ENCODE measurements at regions of chr18 and their contacts with region 1.

Region 1: GRCh38 chr18:54558609-54559585 is 32.1 kb upstream of the DYNAP start:
- DNase-seq: peak; percentile 59
- ATAC-seq: no peak
- H3K4me3 ChIP-seq: no peak overlapping the region
- H3K27ac ChIP-seq: no peak overlapping the region
- H3K4me1 ChIP-seq: no peaks in the 10 kb centered on the region
- H3K27me3 ChIP-seq: no peaks in the 10 kb centered on the region
- CTCF ChIP-seq: peak; percentile 80

Region 2: GRCh38 chr18:54392543-54393023 is 166.3 kb before region 1 on chr18:
- CTCF ChIA-PET with region 1: no interaction called
- POLR2A ChIA-PET with region 1: no interaction called
- intact Hi-C with region 1: loop called (anchors 2 kb)
- DNase-seq: peak; percentile 90
- ATAC-seq: peak; percentile 27
- H3K4me3 ChIP-seq: no peak overlapping the region
- H3K27ac ChIP-seq: no peak overlapping the region
- H3K4me1 ChIP-seq: peaks cover 25% of the 10 kb centered on the region
- H3K27me3 ChIP-seq: no peaks in the 10 kb centered on the region
- CTCF ChIP-seq: peak; percentile 76

Region 3: GRCh38 chr18:54647176-54647575 is 88.3 kb after region 1 on chr18:
- CTCF ChIA-PET with region 1: interaction called, 3 read pairs
- POLR2A ChIA-PET with region 1: no interaction called
- intact Hi-C with region 1: loop called (anchors 1 kb)
- DNase-seq: peak; percentile 69
- ATAC-seq: peak; percentile 74
- H3K4me3 ChIP-seq: no peak overlapping the region
- H3K27ac ChIP-seq: no peak overlapping the region
- H3K4me1 ChIP-seq: no peaks in the 10 kb centered on the region
- H3K27me3 ChIP-seq: peaks cover 5% of the 10 kb centered on the region; the same call in 1 of the 2 replicates
- CTCF ChIP-seq: peak; percentile 77

Region 4: DNA sequence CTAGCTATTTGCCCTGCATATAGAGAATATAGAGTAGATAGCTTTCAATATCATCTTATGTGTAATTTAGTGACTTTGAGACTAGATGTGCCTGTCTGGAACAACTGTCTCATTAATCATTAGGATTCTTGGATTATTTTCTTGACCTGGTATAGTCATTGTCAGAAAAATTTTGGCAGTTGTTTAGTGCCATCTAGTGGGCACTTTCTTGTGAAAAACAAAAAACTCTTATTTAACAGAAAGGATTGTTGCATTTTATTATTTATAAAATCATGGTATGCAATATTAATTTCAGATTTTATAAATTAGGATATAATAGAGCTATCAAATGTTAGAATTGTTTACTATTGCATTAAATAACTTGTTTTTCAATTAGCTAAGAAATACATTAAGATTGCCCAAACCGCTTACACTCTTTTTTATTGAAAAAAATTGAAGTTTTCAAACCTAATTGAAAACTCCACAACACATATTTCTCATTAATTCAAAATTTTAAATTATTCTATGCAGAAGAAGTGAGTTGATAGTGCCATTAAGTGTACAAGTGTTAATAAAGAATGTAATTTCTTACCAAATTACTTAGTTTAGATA is 112.5 kb after region 1 on chr18:
- CTCF ChIA-PET with region 1: no interaction called
- POLR2A ChIA-PET with region 1: no interaction called
- intact Hi-C with region 1: loop called (anchors 1 kb)
- DNase-seq: peak; percentile 70
- ATAC-seq: peak; percentile 29; the same call in 1 of the 2 replicates
- H3K4me3 ChIP-seq: no peak overlapping the region
- H3K27ac ChIP-seq: no peak overlapping the region
- H3K4me1 ChIP-seq: peaks cover 20% of the 10 kb centered on the region
- H3K27me3 ChIP-seq: no peaks in the 10 kb centered on the region
- CTCF ChIP-seq: peak; percentile 73

Region 5: DNA sequence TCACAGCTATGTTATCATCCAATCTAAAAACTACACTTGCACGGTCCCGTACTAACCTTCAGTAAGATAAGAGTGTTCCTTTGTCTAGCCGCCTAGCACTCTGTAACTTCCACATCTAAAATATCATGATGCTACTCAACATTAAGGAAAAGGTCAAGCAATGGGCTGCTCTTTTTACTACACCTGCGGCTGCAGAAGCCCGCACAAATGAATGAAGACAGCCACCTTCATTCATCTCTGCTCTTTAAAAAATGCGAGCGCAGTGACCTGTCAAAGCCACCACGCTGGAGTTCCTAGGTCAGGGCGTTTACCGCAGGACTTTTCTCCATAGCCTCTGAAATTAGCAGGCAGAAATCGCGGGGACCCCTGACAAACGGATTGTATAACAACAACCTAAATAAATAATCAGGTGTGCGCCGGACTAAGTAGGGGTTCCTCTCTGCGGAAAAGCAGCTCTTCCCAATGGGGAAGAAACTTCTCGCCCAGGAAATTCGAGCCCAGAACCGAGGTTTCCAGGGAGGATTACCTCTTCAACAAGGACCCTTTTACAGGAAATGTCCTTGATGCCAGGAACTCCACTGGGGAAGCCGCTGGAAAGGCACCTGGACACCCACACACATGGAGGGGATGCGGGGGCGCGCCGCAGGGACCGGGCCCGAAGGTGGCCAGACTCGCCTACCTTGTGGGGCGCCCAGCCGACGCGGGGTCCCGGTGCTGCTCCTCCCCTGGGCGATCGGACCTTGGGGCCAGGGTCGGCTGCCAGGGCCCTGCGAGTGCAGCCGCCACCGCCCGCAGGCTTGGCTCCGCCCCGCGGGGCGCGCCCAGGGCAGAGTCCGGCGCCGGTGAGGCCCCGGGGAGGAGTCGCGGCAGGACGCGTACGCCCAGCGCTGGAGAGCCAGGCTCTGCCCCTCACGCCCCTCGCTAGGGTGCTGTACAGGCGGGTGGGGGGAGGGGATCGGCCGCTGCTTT is 400.0 kb after region 1 on chr18 and contains the start of gene CCDC68:
- CTCF ChIA-PET with region 1: no interaction called
- POLR2A ChIA-PET with region 1: no interaction called
- intact Hi-C with region 1: loop called (anchors 10 kb)
- DNase-seq: peak; percentile 68
- ATAC-seq: peak; percentile 98
- H3K4me3 ChIP-seq: peak within 1 kb of the TSS; percentile 80
- H3K27ac ChIP-seq: no peak within 1 kb of the TSS
- H3K4me1 ChIP-seq: peaks cover 13% of the 10 kb centered on the region
- H3K27me3 ChIP-seq: no peaks in the 10 kb centered on the region
- CTCF ChIP-seq: no peak
- total RNA-seq, gene CCDC68: 2.6 and 3.1 TPM in 2 replicates